Naive thymus-derived CD4-positive, alpha-beta T cell (primary cell): ENCODE measurements at regions of chr13 and their contacts with region 1.

Region 1: DNA sequence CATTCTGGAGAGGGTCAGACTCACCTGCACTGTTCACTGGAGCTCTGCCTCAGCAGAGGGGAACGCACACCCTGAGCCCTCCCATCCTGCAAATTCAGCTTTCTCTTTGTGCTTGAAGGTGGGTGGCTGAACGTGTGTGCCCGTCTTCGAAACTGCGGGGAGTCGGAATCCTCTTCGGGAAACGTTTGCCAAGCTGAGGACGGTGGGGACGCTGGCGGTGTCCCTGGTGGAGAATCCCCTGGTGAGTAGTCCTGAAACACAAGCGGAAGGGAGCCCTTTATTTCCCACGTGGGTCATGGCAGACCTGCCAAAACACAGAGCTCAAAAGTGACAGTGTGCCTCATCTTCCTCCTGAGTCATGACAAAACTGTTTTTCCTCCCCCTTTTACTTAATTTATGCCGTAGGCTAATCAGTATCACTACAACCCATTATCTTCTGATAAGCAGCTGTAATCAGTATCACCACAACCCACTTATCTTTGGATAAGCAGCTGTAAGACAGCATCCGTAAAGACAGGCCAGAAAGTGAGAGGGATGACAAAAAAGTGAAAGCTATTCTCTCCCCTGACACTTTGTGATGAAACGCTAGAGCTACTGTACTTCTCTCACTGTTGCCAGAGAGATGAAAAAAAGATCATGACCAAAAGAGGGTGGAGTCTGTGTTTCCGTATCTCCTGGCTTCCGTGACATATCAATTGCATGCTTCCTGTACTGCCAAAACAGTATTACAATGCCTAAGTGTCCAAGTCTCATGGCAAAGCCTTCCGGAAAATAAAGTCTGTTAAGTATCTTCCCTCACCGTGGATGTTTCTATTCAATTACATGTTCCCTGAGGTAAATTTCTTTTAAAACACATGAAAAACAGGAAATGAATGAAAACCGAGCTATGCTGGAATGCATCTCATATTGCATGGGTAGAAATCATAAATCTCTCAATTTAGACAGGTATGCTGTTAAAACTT is 155.5 kb downstream of the TBC1D4 start:
- DNase-seq: peak; percentile 19 to 88 (median 82)
- ATAC-seq: peak; percentile 94
- H3K4me3 ChIP-seq: peak overlapping the region; percentile 71
- H3K4me3 Mint-ChIP-seq: peak overlapping the region; percentile 90 to 97 (median 94)
- H3K27ac ChIP-seq: peak overlapping the region; percentile 87
- H3K27ac Mint-ChIP-seq: peak overlapping the region; percentile 92 to 99 (median 98)
- H3K4me1 ChIP-seq: peaks cover 4 to 24% of the 10 kb centered on the region in 2 donors
- H3K4me1 Mint-ChIP-seq: peaks cover 22 to 63% (median 55%) of the 10 kb centered on the region in 7 donors
- H3K27me3 ChIP-seq: no peaks in the 10 kb centered on the region
- H3K27me3 Mint-ChIP-seq: no peaks in the 10 kb centered on the region

Region 2: GRCh38 chr13:73521290-73521624 is 1805.2 kb before region 1 on chr13:
- CTCF ChIA-PET with region 1: no interaction called
- POLR2A ChIA-PET with region 1: interaction called, 4 read pairs
- intact Hi-C with region 1: loop called in 1 of 2 experiments (anchors 5 kb)
- DNase-seq: peak in 6 of 9 donors; percentile 35 to 57 (median 52)
- ATAC-seq: peak; percentile 79
- H3K4me3 ChIP-seq: peak overlapping the region; percentile 59
- H3K4me3 Mint-ChIP-seq: peak overlapping the region; percentile 82 to 93 (median 88)
- H3K27ac ChIP-seq: peak overlapping the region; percentile 71
- H3K27ac Mint-ChIP-seq: peak overlapping the region; percentile 89 to 99 (median 97)
- H3K4me1 ChIP-seq: peaks cover 0 to 13% of the 10 kb centered on the region in 2 donors
- H3K4me1 Mint-ChIP-seq: peaks cover 9 to 32% (median 25%) of the 10 kb centered on the region in 7 donors
- H3K27me3 ChIP-seq: no peaks in the 10 kb centered on the region
- H3K27me3 Mint-ChIP-seq: peaks cover 0 to 3% (median 0%) of the 10 kb centered on the region in 5 donors

Region 3: GRCh38 chr13:74230984-74231501 is 1095.4 kb before region 1 on chr13:
- CTCF ChIA-PET with region 1: no interaction called
- POLR2A ChIA-PET with region 1: interaction called, 3 read pairs
- intact Hi-C with region 1: loop called in 1 of 2 experiments (anchors 5 kb)
- DNase-seq: peak in 7 of 9 donors; percentile 37 to 78 (median 69)
- ATAC-seq: peak; percentile 85
- H3K4me3 ChIP-seq: peak overlapping the region; percentile 61
- H3K4me3 Mint-ChIP-seq: peak overlapping the region; percentile 72 to 87 (median 84)
- H3K27ac ChIP-seq: peak overlapping the region; percentile 70
- H3K27ac Mint-ChIP-seq: peak overlapping the region; percentile 86 to 97 (median 90)
- H3K4me1 ChIP-seq: peaks cover 0 to 29% of the 10 kb centered on the region in 2 donors
- H3K4me1 Mint-ChIP-seq: peaks cover 8 to 62% (median 52%) of the 10 kb centered on the region in 7 donors
- H3K27me3 ChIP-seq: no peaks in the 10 kb centered on the region
- H3K27me3 Mint-ChIP-seq: no peaks in the 10 kb centered on the region

Region 4: GRCh38 chr13:75312884-75313520 is 13.5 kb before region 1 on chr13:
- CTCF ChIA-PET with region 1: interaction called, 7 read pairs
- POLR2A ChIA-PET with region 1: interaction called, 33 read pairs
- intact Hi-C with region 1: loop called (anchors 1 kb)
- DNase-seq: peak in 1 of 9 donors; percentile 47
- ATAC-seq: peak; percentile 38
- H3K4me3 ChIP-seq: no peak overlapping the region
- H3K4me3 Mint-ChIP-seq: peak overlapping the region in 1 of 10 donors; percentile 35
- H3K27ac ChIP-seq: no peak overlapping the region
- H3K27ac Mint-ChIP-seq: peak overlapping the region in 3 of 9 donors; percentile 43 to 76 (median 65)
- H3K4me1 ChIP-seq: peaks cover 8 to 15% of the 10 kb centered on the region in 2 donors
- H3K4me1 Mint-ChIP-seq: peaks cover 6 to 37% (median 29%) of the 10 kb centered on the region in 7 donors
- H3K27me3 ChIP-seq: no peaks in the 10 kb centered on the region
- H3K27me3 Mint-ChIP-seq: no peaks in the 10 kb centered on the region

Region 5: GRCh38 chr13:75482070-75482819 is 155.8 kb after region 1 on chr13 and contains the start of gene TBC1D4:
- CTCF ChIA-PET with region 1: no interaction called
- POLR2A ChIA-PET with region 1: no interaction called
- intact Hi-C with region 1: loop called in 1 of 2 experiments (anchors 2 kb)
- DNase-seq: peak in 8 of 9 donors; percentile 19 to 69 (median 22)
- ATAC-seq: peak; percentile 85
- H3K4me3 ChIP-seq: peak within 1 kb of the TSS; percentile 60
- H3K4me3 Mint-ChIP-seq: peak within 1 kb of the TSS; percentile 90 to 99 (median 95)
- H3K27ac ChIP-seq: no peak within 1 kb of the TSS
- H3K27ac Mint-ChIP-seq: peak within 1 kb of the TSS in 1 of 9 donors; percentile 83
- H3K4me1 ChIP-seq: peaks cover 0 to 5% of the 10 kb centered on the region in 2 donors
- H3K4me1 Mint-ChIP-seq: peaks cover 7 to 24% (median 18%) of the 10 kb centered on the region in 7 donors
- H3K27me3 ChIP-seq: peaks cover 12 to 15% of the 10 kb centered on the region in 2 donors
- H3K27me3 Mint-ChIP-seq: peaks cover 57 to 80% (median 74%) of the 10 kb centered on the region in 5 donors
- total RNA-seq, gene TBC1D4: 12.4 to 73.8 (median 42.8) TPM

Region 6: GRCh38 chr13:75635828-75636435 is 309.5 kb after region 1 on chr13 and contains the start of gene LMO7:
- CTCF ChIA-PET with region 1: no interaction called
- POLR2A ChIA-PET with region 1: no interaction called
- intact Hi-C with region 1: loop called (anchors 2 to 10 kb)
- DNase-seq: peak; percentile 39 to 60 (median 44)
- ATAC-seq: peak; percentile 69
- H3K4me3 ChIP-seq: peak within 1 kb of the TSS; percentile 75
- H3K4me3 Mint-ChIP-seq: peak within 1 kb of the TSS; percentile 77 to 91 (median 85)
- H3K27ac ChIP-seq: peak within 1 kb of the TSS; percentile 34
- H3K27ac Mint-ChIP-seq: peak within 1 kb of the TSS; percentile 38 to 82 (median 71)
- H3K4me1 ChIP-seq: no peaks in the 10 kb centered on the region
- H3K4me1 Mint-ChIP-seq: peaks cover 7 to 23% (median 18%) of the 10 kb centered on the region in 7 donors
- H3K27me3 ChIP-seq: no peaks in the 10 kb centered on the region
- H3K27me3 Mint-ChIP-seq: peaks cover 0 to 21% (median 10%) of the 10 kb centered on the region in 5 donors
- total RNA-seq, gene LMO7: 18.0 to 68.1 (median 45.3) TPM

Region 7: DNA sequence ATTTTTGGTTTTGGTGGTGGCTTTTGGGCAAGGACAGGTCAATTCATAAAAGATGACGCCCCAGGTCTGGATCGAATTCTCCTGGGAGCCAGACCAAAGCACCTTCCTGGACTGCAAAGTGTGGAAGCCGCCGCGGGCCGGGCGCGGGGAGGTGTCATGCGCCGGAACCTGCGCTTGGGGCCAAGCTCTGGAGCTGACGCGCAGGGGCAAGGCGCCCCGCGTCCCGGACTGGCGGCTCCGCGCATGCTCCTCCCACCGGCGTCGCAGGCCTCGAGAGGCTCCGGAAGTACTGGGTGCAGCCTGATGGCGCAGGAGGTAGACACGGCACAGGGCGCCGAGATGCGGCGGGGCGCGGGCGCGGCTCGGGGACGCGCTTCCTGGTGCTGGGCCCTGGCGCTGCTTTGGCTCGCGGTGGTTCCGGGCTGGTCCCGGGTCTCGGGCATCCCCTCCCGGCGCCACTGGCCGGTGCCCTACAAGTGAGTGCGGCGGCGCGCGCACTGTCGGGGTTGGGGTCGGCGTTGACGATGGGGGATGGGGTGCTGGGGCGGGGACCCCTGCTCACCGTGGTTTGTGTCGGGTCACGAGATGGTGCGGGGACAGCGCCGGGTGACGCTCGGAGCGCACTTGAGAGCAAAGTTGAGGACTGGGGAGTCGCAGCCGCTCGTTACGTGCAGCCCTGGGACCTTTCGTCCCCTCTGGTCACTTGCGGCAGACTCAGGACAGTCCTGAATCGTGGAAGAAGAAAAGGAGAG is 1665.5 kb after region 1 on chr13 and contains the start of gene CLN5:
- CTCF ChIA-PET with region 1: no interaction called
- POLR2A ChIA-PET with region 1: no interaction called
- intact Hi-C with region 1: loop called in 1 of 2 experiments (anchors 10 kb)
- DNase-seq: peak; percentile 93 to 98 (median 96)
- ATAC-seq: peak; percentile 92
- H3K4me3 ChIP-seq: peak within 1 kb of the TSS; percentile 87
- H3K4me3 Mint-ChIP-seq: peak within 1 kb of the TSS; percentile 88 to 99 (median 96)
- H3K27ac ChIP-seq: peak within 1 kb of the TSS; percentile 96
- H3K27ac Mint-ChIP-seq: peak within 1 kb of the TSS; percentile 96 to 99 (median 99)
- H3K4me1 ChIP-seq: peaks cover 12 to 19% of the 10 kb centered on the region in 2 donors
- H3K4me1 Mint-ChIP-seq: peaks cover 27 to 59% (median 53%) of the 10 kb centered on the region in 7 donors
- H3K27me3 ChIP-seq: peaks cover 0 to 3% of the 10 kb centered on the region in 2 donors
- H3K27me3 Mint-ChIP-seq: peaks cover 0 to 12% (median 0%) of the 10 kb centered on the region in 5 donors
- total RNA-seq, gene CLN5: 18.9 to 45.3 (median 27.7) TPM